Activated T-helper 2 cell treated with anti-CD3 and anti-CD28 coated beads, Interferon-gamma antibody, Interleukin-2, Interleukin-4, amounts not matched to agents 10 μg/mL and 5 μg/mL and 100 μg/mL, durations not matched to agents 14 hours and 24 hours and 36 hours (primary cell): ENCODE measurements at regions of chr19 and their contacts with region 1.

Region 1: GRCh38 chr19:44093931-44094765 is at the start of gene ZNF224:
- DNase-seq: peak; percentile 76
- H3K4me3 Mint-ChIP-seq: peak within 1 kb of the TSS; percentile 98
- H3K27ac Mint-ChIP-seq: peak within 1 kb of the TSS; percentile 77
- H3K4me1 Mint-ChIP-seq: peaks cover 9% of the 10 kb centered on the region
- H3K27me3 Mint-ChIP-seq: no peaks in the 10 kb centered on the region
- total RNA-seq, gene ZNF224: 19.4 and 22.3 TPM in 2 replicates

Region 2: GRCh38 chr19:43934985-43935708 is 159.0 kb before region 1 on chr19 and contains the start of gene ZNF45:
- intact Hi-C with region 1: loop called (anchors 5 kb)
- DNase-seq: peak; percentile 78
- H3K4me3 Mint-ChIP-seq: peak within 1 kb of the TSS; percentile 97
- H3K27ac Mint-ChIP-seq: peak within 1 kb of the TSS; percentile 90
- H3K4me1 Mint-ChIP-seq: peaks cover 10% of the 10 kb centered on the region
- H3K27me3 Mint-ChIP-seq: no peaks in the 10 kb centered on the region
- total RNA-seq, gene ZNF45: 11.1 and 12.2 TPM in 2 replicates

Region 3: GRCh38 chr19:44071824-44072542 is 22.2 kb before region 1 on chr19 and contains the start of gene ZNF284:
- intact Hi-C with region 1: loop called (anchors 1 kb)
- DNase-seq: peak; percentile 77
- H3K4me3 Mint-ChIP-seq: peak within 1 kb of the TSS; percentile 85
- H3K27ac Mint-ChIP-seq: peak within 1 kb of the TSS; percentile 50
- H3K4me1 Mint-ChIP-seq: peaks cover 17% of the 10 kb centered on the region
- H3K27me3 Mint-ChIP-seq: no peaks in the 10 kb centered on the region
- total RNA-seq, gene ZNF284: 1.1 and 1.4 TPM in 2 replicates

Region 4: GRCh38 chr19:44113138-44113783 is 19.1 kb after region 1 on chr19 and contains the start of gene ZNF225:
- intact Hi-C with region 1: loop called (anchors 1 kb)
- DNase-seq: peak; percentile 81
- H3K4me3 Mint-ChIP-seq: peak within 1 kb of the TSS; percentile 99
- H3K27ac Mint-ChIP-seq: peak within 1 kb of the TSS; percentile 82
- H3K4me1 Mint-ChIP-seq: peaks cover 14% of the 10 kb centered on the region
- H3K27me3 Mint-ChIP-seq: no peaks in the 10 kb centered on the region
- total RNA-seq, gene ZNF225: 3.5 and 3.6 TPM in 2 replicates

Region 5: GRCh38 chr19:44164673-44165512 is 70.7 kb after region 1 on chr19 and contains the start of gene ZNF226:
- intact Hi-C with region 1: loop called (anchors 1 kb)
- DNase-seq: peak; percentile 71
- H3K4me3 Mint-ChIP-seq: peak within 1 kb of the TSS; percentile 85
- H3K27ac Mint-ChIP-seq: peak within 1 kb of the TSS; percentile 80
- H3K4me1 Mint-ChIP-seq: peaks cover 22% of the 10 kb centered on the region
- H3K27me3 Mint-ChIP-seq: no peaks in the 10 kb centered on the region
- total RNA-seq, gene ZNF226: 6.6 and 9.8 TPM in 2 replicates

Region 6: GRCh38 chr19:44212250-44212865 is 118.2 kb after region 1 on chr19 and contains the start of gene ZNF227:
- intact Hi-C with region 1: loop called (anchors 5 kb)
- DNase-seq: peak; percentile 70
- H3K4me3 Mint-ChIP-seq: peak within 1 kb of the TSS; percentile 92
- H3K27ac Mint-ChIP-seq: peak within 1 kb of the TSS; percentile 85
- H3K4me1 Mint-ChIP-seq: peaks cover 16% of the 10 kb centered on the region
- H3K27me3 Mint-ChIP-seq: no peaks in the 10 kb centered on the region
- total RNA-seq, gene ZNF227: 17.6 and 17.7 TPM in 2 replicates